Mucosa of descending colon (tissue), 3 donors: ENCODE measurements at regions of chr20 and their contacts with region 1.

Region 1: DNA sequence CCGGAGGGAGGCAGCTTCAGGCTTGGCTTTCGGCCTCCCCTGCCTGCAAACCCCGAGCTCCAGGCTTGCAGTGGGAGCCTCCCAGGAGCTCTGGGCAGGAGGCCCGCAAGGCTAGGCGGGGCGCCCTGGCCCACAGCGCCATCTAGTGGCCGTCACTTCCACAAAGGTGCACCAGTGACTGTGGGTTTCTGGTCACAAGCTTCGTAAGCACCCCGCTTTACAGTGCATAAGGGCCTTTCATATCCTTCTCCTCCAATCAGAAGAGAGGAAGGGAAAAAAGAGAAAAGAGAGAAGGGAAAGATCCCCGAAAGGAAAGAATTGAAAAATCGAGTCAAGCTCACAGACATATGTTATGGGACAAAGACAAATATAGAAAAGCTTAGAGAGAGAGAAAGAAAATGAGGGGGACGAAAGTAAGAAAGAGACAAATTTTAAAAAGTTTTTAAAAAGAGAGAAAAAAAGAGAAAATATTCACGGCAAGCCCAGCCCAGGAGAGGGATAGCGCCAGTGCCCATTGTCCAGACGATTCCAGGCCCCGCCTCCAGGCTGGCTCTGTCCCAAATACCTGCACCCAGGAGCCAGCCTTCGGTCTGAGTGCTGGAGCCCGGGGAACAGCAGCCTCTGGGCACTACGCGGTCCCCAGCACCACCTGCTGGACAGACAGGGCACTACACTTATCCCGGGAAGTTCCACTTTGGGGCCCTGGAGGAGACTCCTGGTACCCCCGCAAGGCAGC is 207.1 kb downstream of the PREX1 start:
- DNase-seq: peak; percentile 90 to 94 (median 93)
- ATAC-seq: peak; percentile 95
- H3K4me3 ChIP-seq: no peak overlapping the region
- H3K4me1 ChIP-seq: peaks cover 20% of the 10 kb centered on the region
- CTCF ChIP-seq: peak; percentile 87

Region 2: GRCh38 chr20:47663333-47664067 is 957.2 kb before region 1 on chr20:
- intact Hi-C with region 1: loop called in 1 of 2 experiments (anchors 5 kb)
- DNase-seq: peak; percentile 75 to 85 (median 78)
- ATAC-seq: peak; percentile 91
- H3K4me3 ChIP-seq: no peak overlapping the region
- H3K4me1 ChIP-seq: no peaks in the 10 kb centered on the region
- CTCF ChIP-seq: peak; percentile 95

Region 3: DNA sequence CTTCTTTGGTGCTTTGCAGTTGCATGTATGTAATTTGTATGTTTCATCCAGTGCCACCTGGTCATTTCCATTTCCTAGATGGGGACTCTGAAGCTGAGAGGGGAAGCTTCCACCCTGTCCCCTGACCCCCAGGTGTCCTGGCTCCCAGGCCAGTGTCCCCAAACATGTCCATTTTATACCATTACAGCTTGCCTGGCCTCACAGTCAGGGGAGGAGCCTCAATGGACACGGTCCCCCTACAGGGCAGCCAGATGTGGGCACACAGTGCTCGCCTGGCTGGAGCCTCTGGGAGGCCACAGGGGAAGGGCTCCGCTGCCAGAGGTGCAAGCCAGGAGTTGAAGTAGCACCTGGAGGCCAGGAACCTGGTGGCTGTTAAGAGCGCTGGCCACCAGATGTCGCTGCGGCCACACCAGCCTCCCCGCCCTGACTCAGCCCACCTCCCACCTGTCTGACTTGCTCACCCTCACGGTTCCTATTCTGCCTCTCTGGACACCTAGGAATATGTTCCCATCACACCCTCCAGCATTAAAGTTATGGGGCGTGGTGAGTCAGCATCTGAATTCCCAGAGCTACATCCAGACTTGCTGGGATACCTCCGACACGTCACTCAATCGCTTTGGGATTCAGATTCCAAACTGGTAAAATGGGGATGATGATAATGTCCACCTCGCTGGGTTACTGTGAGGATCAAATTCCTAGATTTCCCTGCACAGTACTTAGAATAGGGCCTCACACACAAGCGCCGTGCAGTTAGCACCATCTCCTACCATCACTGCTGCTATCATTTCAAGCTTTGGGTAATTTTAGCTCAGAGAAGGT is 942.8 kb before region 1 on chr20:
- intact Hi-C with region 1: loop called in 1 of 2 experiments (anchors 10 kb)
- DNase-seq: peak in 2 of 3 donors; percentile 55 to 61
- ATAC-seq: peak; percentile 68
- H3K4me3 ChIP-seq: no peak overlapping the region
- H3K4me1 ChIP-seq: no peaks in the 10 kb centered on the region
- CTCF ChIP-seq: peak; percentile 57

Region 4: DNA sequence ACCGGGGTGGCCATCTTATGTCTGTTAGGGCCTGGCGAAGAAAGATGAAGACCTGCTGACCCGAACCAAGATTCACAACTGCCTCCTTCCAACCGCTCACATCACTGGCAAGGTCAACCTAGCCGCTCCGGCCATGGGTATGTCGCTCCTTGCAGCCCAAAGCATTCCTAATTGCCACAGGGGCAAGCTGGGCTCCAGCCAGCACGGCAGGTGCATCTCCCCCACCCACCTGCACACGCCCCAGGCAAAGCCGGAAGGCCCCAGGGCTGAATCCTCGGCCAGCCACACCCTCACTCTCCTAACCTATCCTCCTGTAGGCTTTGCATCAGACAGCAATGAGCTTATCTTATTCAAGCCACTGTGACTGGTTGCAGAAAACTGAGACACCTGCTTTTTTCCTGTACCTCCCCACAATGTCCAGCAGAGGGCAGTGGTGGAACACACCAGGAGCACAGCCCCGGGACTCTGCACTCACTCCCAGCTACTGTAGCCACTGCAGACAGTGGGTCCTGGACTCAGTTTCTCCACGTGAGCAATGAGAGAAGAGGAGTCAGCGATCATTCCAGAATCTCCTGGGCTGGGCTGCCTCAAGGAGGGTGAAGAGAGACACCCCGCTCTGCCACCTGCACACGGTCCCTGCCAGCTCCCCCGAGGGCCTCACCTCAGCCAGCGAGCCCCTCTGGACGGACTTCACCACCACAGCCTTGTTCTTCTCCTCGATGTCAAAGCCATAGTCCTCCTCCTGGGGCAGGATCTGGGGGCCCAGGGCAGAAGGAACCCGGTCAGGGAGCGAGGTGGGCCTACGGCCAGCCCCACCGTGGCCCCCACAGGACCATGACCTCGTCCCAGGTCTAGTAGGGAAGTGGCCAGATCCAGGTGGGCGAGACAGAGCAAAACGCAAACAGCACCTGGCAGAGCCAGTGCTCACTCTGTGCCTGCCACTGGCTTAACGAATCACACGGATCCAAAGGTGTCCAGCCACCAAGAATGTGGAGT is 37.1 kb after region 1 on chr20:
- intact Hi-C with region 1: no loop called
- DNase-seq: peak in 2 of 3 donors; percentile 59 to 68
- ATAC-seq: peak; percentile 96
- H3K4me3 ChIP-seq: no peak overlapping the region
- H3K4me1 ChIP-seq: no peaks in the 10 kb centered on the region
- CTCF ChIP-seq: peak; percentile 84

Region 5: GRCh38 chr20:48750947-48751635 is 130.4 kb after region 1 on chr20:
- intact Hi-C with region 1: no loop called
- DNase-seq: peak; percentile 40 to 78 (median 58)
- ATAC-seq: peak; percentile 76
- H3K4me3 ChIP-seq: no peak overlapping the region
- H3K4me1 ChIP-seq: peaks cover 2% of the 10 kb centered on the region
- CTCF ChIP-seq: no peak